Lower lobe of right lung (tissue), 2 donors: ENCODE measurements at regions of chr4 and their contacts with region 1.

Region 1: GRCh38 chr4:88535090-88535755 is 11.6 kb upstream of the PYURF start:
- DNase-seq: no peak
- ATAC-seq: no peak
- H3K4me3 ChIP-seq: no peak overlapping the region
- H3K27ac ChIP-seq: no peak overlapping the region
- H3K4me1 ChIP-seq: peaks cover 7% of the 10 kb centered on the region
- H3K27me3 ChIP-seq: no peaks in the 10 kb centered on the region
- CTCF ChIP-seq: no peak

Region 2: DNA sequence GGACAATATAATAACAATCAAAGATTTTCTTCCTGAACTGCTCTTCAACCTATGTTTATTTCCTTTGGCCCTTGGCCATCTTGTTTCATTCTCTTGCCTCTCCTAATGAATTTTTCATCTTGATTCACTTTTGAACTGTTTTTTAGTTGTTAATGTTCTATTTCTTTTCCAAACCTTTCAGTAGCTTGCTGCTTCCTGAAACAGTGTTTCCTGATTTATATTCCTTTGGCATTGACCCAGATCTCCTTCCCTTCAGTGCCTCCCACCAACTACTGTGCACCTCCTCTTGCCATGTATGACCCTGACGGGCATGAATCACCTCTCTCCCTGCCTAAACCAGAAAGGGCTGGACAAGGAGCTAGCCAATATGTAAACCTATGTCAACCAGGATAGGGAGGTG is 585.3 kb before region 1 on chr4:
- intact Hi-C with region 1: no loop called
- DNase-seq: no peak
- ATAC-seq: peak in 1 of 2 donors; percentile 53
- H3K4me3 ChIP-seq: no peak overlapping the region
- H3K27ac ChIP-seq: no peak overlapping the region
- H3K4me1 ChIP-seq: no peaks in the 10 kb centered on the region
- H3K27me3 ChIP-seq: no peaks in the 10 kb centered on the region
- CTCF ChIP-seq: no peak

Region 3: DNA sequence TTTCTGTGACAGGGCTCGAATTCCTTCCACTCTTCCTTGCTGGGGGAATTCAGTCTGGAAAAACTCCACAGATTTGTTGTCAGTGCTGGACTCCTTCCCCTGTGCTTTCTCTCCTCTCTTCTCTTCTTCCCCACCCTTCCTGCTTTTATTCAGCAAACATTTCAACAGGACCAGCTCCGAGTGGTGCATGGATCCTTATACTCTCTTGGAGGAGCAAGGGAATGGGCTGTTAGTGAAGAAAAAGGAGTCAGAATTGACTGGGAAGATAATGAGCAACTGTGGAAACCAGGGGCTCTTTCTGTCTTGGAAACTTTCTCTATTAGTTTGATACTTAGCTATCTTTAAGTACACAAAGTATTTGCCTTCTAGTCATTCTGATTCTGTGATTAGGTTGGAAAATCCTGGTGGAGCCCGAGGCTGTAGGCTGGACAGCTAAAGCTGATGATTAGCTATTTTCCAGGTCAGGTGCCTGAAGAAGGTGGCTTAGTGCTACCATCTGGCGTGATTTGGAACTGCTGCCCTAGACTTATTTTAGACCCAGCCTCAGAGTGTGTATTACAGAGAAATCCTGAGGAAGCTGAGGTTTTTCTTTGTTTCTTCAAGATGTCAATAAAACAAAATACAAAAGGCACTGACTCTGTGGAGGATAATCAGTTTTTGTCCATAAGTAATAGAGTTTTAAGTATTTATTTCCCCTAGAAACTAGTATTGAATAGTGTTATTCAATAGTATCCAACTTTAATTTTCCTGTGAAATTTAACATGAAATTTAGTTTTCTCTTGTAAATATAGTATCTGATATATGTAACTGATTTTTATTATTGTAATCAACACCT is 124.0 kb after region 1 on chr4:
- intact Hi-C with region 1: loop called (anchors 5 kb)
- DNase-seq: no peak
- ATAC-seq: peak; percentile 86 to 91
- H3K4me3 ChIP-seq: no peak overlapping the region
- H3K27ac ChIP-seq: no peak overlapping the region
- H3K4me1 ChIP-seq: peaks cover 6% of the 10 kb centered on the region
- H3K27me3 ChIP-seq: no peaks in the 10 kb centered on the region
- CTCF ChIP-seq: peak; percentile 79